B cell (primary cell): ENCODE measurements at regions of chr11 and their contacts with region 1.

Region 1: DNA sequence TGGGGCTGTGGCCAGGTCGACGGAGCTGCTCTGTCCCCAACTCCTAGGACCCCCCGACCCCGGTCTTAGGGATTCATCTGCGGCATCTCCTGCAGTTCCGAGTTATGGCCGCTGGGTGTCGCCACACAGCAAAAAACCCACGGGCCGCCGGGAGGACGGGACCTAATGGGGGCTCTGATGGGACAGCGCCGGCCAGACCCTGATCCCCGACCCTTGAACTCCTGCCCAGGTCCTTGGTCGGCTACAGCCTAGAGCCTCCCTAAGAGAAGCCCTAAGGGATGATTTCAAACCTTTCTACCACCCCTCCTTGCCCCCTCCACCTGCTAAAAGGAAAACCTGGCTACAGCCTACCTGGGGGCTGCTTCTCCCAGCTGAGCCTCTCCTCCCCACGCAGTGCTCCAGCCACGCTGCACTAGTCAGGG is 30.8 kb upstream of the LRRC10B start:
- DNase-seq: peak; percentile 69
- ATAC-seq: peak; percentile 62
- H3K4me3 ChIP-seq: no peak overlapping the region
- H3K4me3 Mint-ChIP-seq: no peak overlapping the region
- H3K27ac ChIP-seq: no peak overlapping the region
- H3K27ac Mint-ChIP-seq: no peak overlapping the region
- H3K4me1 ChIP-seq: peaks cover 0 to 6% of the 10 kb centered on the region in 2 donors
- H3K4me1 Mint-ChIP-seq: peaks cover 2% of the 10 kb centered on the region
- H3K27me3 ChIP-seq: peaks cover 0 to 15% (median 0%) of the 10 kb centered on the region in 4 experiments
- H3K27me3 Mint-ChIP-seq: peaks cover 7% of the 10 kb centered on the region
- CTCF ChIP-seq: peak; percentile 95

Region 2: GRCh38 chr11:61422226-61422625 is 55.5 kb before region 1 on chr11:
- CTCF ChIA-PET with region 1: no interaction called
- POLR2A ChIA-PET with region 1: no interaction called
- intact Hi-C with region 1: no loop called
- DNase-seq: no peak
- ATAC-seq: no peak
- H3K4me3 ChIP-seq: no peak overlapping the region
- H3K4me3 Mint-ChIP-seq: no peak overlapping the region
- H3K27ac ChIP-seq: no peak overlapping the region
- H3K27ac Mint-ChIP-seq: no peak overlapping the region
- H3K4me1 ChIP-seq: peaks cover 0 to 5% of the 10 kb centered on the region in 2 donors
- H3K4me1 Mint-ChIP-seq: peaks cover 24% of the 10 kb centered on the region
- H3K27me3 ChIP-seq: no peaks in the 10 kb centered on the region
- H3K27me3 Mint-ChIP-seq: no peaks in the 10 kb centered on the region
- CTCF ChIP-seq: no peak

Region 3: GRCh38 chr11:61639816-61640443 is 162.2 kb after region 1 on chr11:
- CTCF ChIA-PET with region 1: interaction called, 55 read pairs
- POLR2A ChIA-PET with region 1: no interaction called
- intact Hi-C with region 1: no loop called
- DNase-seq: no peak
- ATAC-seq: no peak
- H3K4me3 ChIP-seq: no peak overlapping the region
- H3K4me3 Mint-ChIP-seq: no peak overlapping the region
- H3K27ac ChIP-seq: no peak overlapping the region
- H3K27ac Mint-ChIP-seq: no peak overlapping the region
- H3K4me1 ChIP-seq: peaks cover 0 to 4% of the 10 kb centered on the region in 2 donors
- H3K4me1 Mint-ChIP-seq: no peaks in the 10 kb centered on the region
- H3K27me3 ChIP-seq: peaks cover 0 to 7% (median 0%) of the 10 kb centered on the region in 4 experiments
- H3K27me3 Mint-ChIP-seq: no peaks in the 10 kb centered on the region
- CTCF ChIP-seq: no peak

Region 4: GRCh38 chr11:61733120-61733978 is 255.6 kb after region 1 on chr11:
- CTCF ChIA-PET with region 1: interaction called, 9 read pairs
- POLR2A ChIA-PET with region 1: no interaction called
- intact Hi-C with region 1: loop called (anchors 2 kb)
- DNase-seq: peak; percentile 86
- ATAC-seq: peak; percentile 91
- H3K4me3 ChIP-seq: no peak overlapping the region
- H3K4me3 Mint-ChIP-seq: no peak overlapping the region
- H3K27ac ChIP-seq: no peak overlapping the region
- H3K27ac Mint-ChIP-seq: no peak overlapping the region
- H3K4me1 ChIP-seq: peaks cover 0 to 8% of the 10 kb centered on the region in 2 donors
- H3K4me1 Mint-ChIP-seq: peaks cover 2% of the 10 kb centered on the region
- H3K27me3 ChIP-seq: no peaks in the 10 kb centered on the region
- H3K27me3 Mint-ChIP-seq: peaks cover 1% of the 10 kb centered on the region
- CTCF ChIP-seq: peak; percentile 94